Activated T-helper 1 cell treated with anti-CD3 and anti-CD28 coated beads, Interleukin-12 subunit alpha, Interleukin-12 subunit beta, Interleukin-2, Interleukin-4 antibody, amounts not matched to agents 30 ng/mL and 10 ng/mL and 1 ng/mL, durations not matched to agents 14 hours and 24 hours and 36 hours (primary cell): ENCODE measurements at regions of chr9 and their contacts with region 1.

Region 1: GRCh38 chr9:99184475-99185347 is 37.0 kb downstream of the ALG2 start:
- DNase-seq: peak; percentile 57
- H3K4me3 Mint-ChIP-seq: no peak overlapping the region
- H3K27ac Mint-ChIP-seq: no peak overlapping the region
- H3K4me1 Mint-ChIP-seq: peaks cover 60% of the 10 kb centered on the region
- H3K27me3 Mint-ChIP-seq: peaks cover 5% of the 10 kb centered on the region

Region 2: GRCh38 chr9:99118782-99119466 is 65.8 kb before region 1 on chr9:
- intact Hi-C with region 1: no loop called
- DNase-seq: peak; percentile 50
- H3K4me3 Mint-ChIP-seq: peak overlapping the region; percentile 77
- H3K27ac Mint-ChIP-seq: peak overlapping the region; percentile 83
- H3K4me1 Mint-ChIP-seq: peaks cover 78% of the 10 kb centered on the region
- H3K27me3 Mint-ChIP-seq: no peaks in the 10 kb centered on the region

Region 3: DNA sequence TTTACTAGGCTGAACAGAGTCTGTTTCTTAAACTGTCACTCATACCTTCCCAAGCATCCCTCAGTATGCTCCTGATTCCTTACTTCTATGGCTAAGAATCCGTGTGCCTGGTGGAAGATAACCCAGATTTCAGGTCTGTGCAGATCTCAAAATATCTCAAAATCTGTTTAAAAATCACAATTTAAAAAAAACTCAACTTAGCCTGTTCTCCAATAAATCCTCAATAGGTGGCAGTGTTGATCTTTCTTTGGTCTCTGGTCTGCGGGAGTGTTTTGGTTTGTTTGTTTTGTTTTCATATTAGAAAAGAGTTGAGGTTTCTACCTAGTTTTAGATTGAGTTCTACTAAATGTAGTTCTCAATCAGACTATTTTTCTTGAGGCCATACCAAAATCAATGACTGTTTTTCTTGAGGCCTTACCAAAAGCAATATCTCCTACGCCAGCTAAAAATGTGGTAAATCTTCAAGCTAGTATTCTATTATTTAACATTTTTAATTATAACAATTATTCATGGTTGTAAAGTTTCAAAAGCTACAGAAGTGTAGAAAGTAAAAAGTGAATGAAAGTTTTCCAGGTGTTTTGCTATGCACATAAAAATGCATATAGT is 21.8 kb before region 1 on chr9:
- intact Hi-C with region 1: loop called (anchors 1 kb)
- DNase-seq: no peak
- H3K4me3 Mint-ChIP-seq: no peak overlapping the region
- H3K27ac Mint-ChIP-seq: no peak overlapping the region
- H3K4me1 Mint-ChIP-seq: peaks cover 25% of the 10 kb centered on the region
- H3K27me3 Mint-ChIP-seq: peaks cover 9% of the 10 kb centered on the region

Region 4: DNA sequence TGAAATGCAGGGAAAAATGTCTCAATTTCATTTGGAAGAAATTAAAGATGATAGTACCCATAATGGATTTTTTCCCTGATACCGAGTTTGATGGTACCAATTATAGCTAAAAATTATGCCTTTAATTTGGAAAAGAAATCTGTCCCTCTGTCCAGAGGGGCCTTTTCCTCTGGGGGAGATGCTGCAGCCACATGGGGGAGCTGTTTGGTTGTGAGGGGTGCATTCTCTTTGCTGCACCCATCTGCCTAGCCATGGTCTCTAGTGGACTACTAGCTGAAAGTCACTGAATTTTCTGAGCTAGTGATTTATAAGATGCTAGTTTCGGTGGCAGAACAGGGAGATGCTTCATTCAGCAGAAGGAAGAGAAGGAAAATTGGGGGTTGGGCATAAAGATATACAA is 47.0 kb after region 1 on chr9:
- intact Hi-C with region 1: loop called (anchors 5 kb)
- DNase-seq: no peak
- H3K4me3 Mint-ChIP-seq: no peak overlapping the region
- H3K27ac Mint-ChIP-seq: no peak overlapping the region
- H3K4me1 Mint-ChIP-seq: peaks cover 51% of the 10 kb centered on the region
- H3K27me3 Mint-ChIP-seq: no peaks in the 10 kb centered on the region

Region 5: DNA sequence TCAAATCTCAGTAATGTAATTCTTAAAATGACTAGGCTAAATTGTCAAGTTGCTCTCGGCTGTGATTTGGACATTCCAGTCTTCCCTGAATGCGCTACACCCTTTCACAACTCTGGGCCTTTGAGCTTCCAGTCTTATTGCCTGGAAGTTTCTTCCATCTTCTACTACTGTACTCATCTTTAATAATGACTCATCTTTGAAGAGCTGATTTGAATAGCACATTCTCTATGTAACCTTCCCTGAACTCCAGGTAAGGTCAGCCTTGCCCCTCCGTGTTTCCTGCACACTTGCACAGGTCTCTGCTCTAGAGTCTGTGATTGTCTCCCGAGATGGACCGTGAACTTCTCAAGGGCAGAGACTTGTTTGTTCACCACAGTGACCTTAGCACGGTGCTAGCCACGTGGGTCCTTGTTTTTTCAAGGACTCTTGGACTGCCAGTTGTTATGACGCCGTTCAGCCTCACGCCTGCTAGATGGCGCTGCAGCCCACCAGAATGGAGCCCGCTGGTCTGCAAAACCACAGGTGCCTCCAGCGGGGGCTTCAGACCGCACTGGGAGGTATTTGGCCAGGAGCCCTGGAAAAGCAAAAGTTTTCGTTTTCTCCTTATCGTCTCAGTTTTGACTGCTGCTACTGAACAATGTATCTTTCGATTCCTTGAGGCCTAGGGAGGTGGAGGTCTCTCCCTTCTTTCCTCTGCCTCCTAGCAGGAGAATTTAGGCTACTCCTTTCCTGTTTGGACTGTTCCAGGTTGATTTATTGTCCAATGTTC is 81.7 kb after region 1 on chr9:
- intact Hi-C with region 1: loop called (anchors 5 kb)
- DNase-seq: peak; percentile 50
- H3K4me3 Mint-ChIP-seq: peak overlapping the region; percentile 3
- H3K27ac Mint-ChIP-seq: no peak overlapping the region
- H3K4me1 Mint-ChIP-seq: peaks cover 14% of the 10 kb centered on the region
- H3K27me3 Mint-ChIP-seq: peaks cover 14% of the 10 kb centered on the region

Region 6: GRCh38 chr9:99954819-99955218 is 770.1 kb after region 1 on chr9:
- intact Hi-C with region 1: loop called (anchors 5 kb)
- DNase-seq: no peak
- H3K4me3 Mint-ChIP-seq: no peak overlapping the region
- H3K27ac Mint-ChIP-seq: peak overlapping the region; percentile 8
- H3K4me1 Mint-ChIP-seq: peaks cover 14% of the 10 kb centered on the region
- H3K27me3 Mint-ChIP-seq: no peaks in the 10 kb centered on the region

Region 7: GRCh38 chr9:100216178-100216787 is 1031.6 kb after region 1 on chr9:
- intact Hi-C with region 1: loop called (anchors 5 kb)
- DNase-seq: peak; percentile 46
- H3K4me3 Mint-ChIP-seq: no peak overlapping the region
- H3K27ac Mint-ChIP-seq: no peak overlapping the region
- H3K4me1 Mint-ChIP-seq: peaks cover 12% of the 10 kb centered on the region
- H3K27me3 Mint-ChIP-seq: no peaks in the 10 kb centered on the region